CD8-positive, alpha-beta T cell (primary cell): ENCODE measurements at regions of chr9 and their contacts with region 1.

Region 1: GRCh38 chr9:85615792-85616191 is 126.0 kb downstream of the AGTPBP1 start:
- DNase-seq: no peak
- ATAC-seq: no peak
- H3K4me3 ChIP-seq: no peak overlapping the region
- H3K4me3 Mint-ChIP-seq: no peak overlapping the region
- H3K27ac ChIP-seq: no peak overlapping the region
- H3K27ac Mint-ChIP-seq: no peak overlapping the region
- H3K4me1 ChIP-seq: no peaks in the 10 kb centered on the region
- H3K4me1 Mint-ChIP-seq: peaks cover 3% of the 10 kb centered on the region
- H3K27me3 ChIP-seq: no peaks in the 10 kb centered on the region
- H3K27me3 Mint-ChIP-seq: no peaks in the 10 kb centered on the region
- CTCF ChIP-seq: no peak

Region 2: DNA sequence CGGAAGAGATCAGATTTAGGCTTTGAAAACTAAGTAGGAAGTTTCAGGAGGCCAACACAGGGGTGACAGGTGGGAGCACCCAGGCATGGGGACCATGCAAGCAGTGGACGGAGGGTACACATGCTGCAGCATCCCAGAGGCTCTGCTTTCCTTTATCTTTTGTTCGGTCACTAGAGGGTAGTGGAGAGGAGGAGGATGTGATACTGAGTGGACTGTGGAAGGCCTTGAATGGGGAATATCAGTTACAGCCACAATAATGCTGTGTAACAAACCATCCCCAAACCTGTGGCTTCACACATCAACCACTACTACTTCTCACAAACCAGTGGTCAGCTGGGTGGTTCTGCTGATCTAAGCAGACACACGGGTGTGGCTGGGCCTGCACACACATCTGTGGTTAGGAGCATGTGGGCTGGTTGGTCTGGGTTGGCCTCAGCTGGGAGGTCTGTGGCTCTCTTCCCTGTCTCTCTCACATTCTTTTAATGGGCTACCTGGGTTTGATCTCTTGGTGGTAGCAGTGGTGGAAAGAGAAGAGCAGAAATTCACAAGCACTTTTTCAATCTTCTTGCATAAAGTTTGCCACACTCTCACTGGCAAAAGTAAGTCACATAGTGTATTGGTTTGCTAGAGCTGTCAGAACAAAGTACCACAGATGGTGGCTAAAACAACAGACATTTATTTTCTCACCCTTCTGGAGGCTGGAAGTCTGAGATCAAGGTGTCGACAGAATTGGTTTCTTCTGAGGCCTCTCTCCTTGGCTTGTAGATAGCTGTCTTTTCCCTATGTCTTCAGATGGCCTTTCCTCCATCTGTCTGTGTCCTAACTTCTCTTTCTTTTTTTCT is 112.8 kb before region 1 on chr9:
- CTCF ChIA-PET with region 1: no interaction called
- POLR2A ChIA-PET with region 1: no interaction called
- intact Hi-C with region 1: no loop called
- DNase-seq: peak in 2 of 9 experiments; percentile 7 to 11
- ATAC-seq: no peak
- H3K4me3 ChIP-seq: no peak overlapping the region
- H3K4me3 Mint-ChIP-seq: no peak overlapping the region
- H3K27ac ChIP-seq: no peak overlapping the region
- H3K27ac Mint-ChIP-seq: no peak overlapping the region
- H3K4me1 ChIP-seq: no peaks in the 10 kb centered on the region
- H3K4me1 Mint-ChIP-seq: no peaks in the 10 kb centered on the region
- H3K27me3 ChIP-seq: no peaks in the 10 kb centered on the region
- H3K27me3 Mint-ChIP-seq: peaks cover 3% of the 10 kb centered on the region
- CTCF ChIP-seq: no peak

Region 3: GRCh38 chr9:85630676-85631075 is 14.9 kb after region 1 on chr9:
- CTCF ChIA-PET with region 1: interaction called, 3 read pairs
- POLR2A ChIA-PET with region 1: no interaction called
- intact Hi-C with region 1: loop called in 1 of 2 experiments (anchors 2 kb)
- DNase-seq: no peak
- ATAC-seq: no peak
- H3K4me3 ChIP-seq: no peak overlapping the region
- H3K4me3 Mint-ChIP-seq: no peak overlapping the region
- H3K27ac ChIP-seq: no peak overlapping the region
- H3K27ac Mint-ChIP-seq: no peak overlapping the region
- H3K4me1 ChIP-seq: no peaks in the 10 kb centered on the region
- H3K4me1 Mint-ChIP-seq: peaks cover 5% of the 10 kb centered on the region
- H3K27me3 ChIP-seq: no peaks in the 10 kb centered on the region
- H3K27me3 Mint-ChIP-seq: no peaks in the 10 kb centered on the region
- CTCF ChIP-seq: no peak

Region 4: GRCh38 chr9:85676790-85677189 is 61.0 kb after region 1 on chr9:
- CTCF ChIA-PET with region 1: no interaction called
- POLR2A ChIA-PET with region 1: no interaction called
- intact Hi-C with region 1: no loop called
- DNase-seq: no peak
- ATAC-seq: no peak
- H3K4me3 ChIP-seq: no peak overlapping the region
- H3K4me3 Mint-ChIP-seq: no peak overlapping the region
- H3K27ac ChIP-seq: no peak overlapping the region
- H3K27ac Mint-ChIP-seq: no peak overlapping the region
- H3K4me1 ChIP-seq: no peaks in the 10 kb centered on the region
- H3K4me1 Mint-ChIP-seq: no peaks in the 10 kb centered on the region
- H3K27me3 ChIP-seq: no peaks in the 10 kb centered on the region
- H3K27me3 Mint-ChIP-seq: no peaks in the 10 kb centered on the region
- CTCF ChIP-seq: no peak